ENCODE measurements at regions of chr1 and their contacts with region 1.

Region 1: GRCh38 chr1:92858564-92859399 is 26.9 kb downstream of the RPL5 start:
- DNase-seq: peak; percentile 82
- H3K4me3 ChIP-seq: peak overlapping the region; percentile 11
- H3K27ac ChIP-seq: no peak overlapping the region
- H3K4me1 ChIP-seq: no peaks in the 10 kb centered on the region
- H3K27me3 ChIP-seq: no peaks in the 10 kb centered on the region
- CTCF ChIP-seq: peak; percentile 92

Region 2: GRCh38 chr1:92960395-92961130 is 101.8 kb after region 1 on chr1:
- intact Hi-C with region 1: loop called (anchors 2 kb)
- DNase-seq: peak; percentile 76
- H3K4me3 ChIP-seq: peak overlapping the region; percentile 91
- H3K27ac ChIP-seq: peak overlapping the region; percentile 98
- H3K4me1 ChIP-seq: peaks cover 7% of the 10 kb centered on the region
- H3K27me3 ChIP-seq: no peaks in the 10 kb centered on the region
- CTCF ChIP-seq: peak; percentile 48

Region 3: GRCh38 chr1:93196591-93196990 is 337.8 kb after region 1 on chr1:
- intact Hi-C with region 1: no loop called
- DNase-seq: no peak
- H3K4me3 ChIP-seq: no peak overlapping the region
- H3K27ac ChIP-seq: no peak overlapping the region
- H3K4me1 ChIP-seq: no peaks in the 10 kb centered on the region
- H3K27me3 ChIP-seq: no peaks in the 10 kb centered on the region
- CTCF ChIP-seq: no peak

Measured in colonic mucosa (tissue), 4 donors.